ENCODE measurements at regions of chr1 and their contacts with region 1.

Region 1: GRCh38 chr1:225603538-225604354 is 49.2 kb downstream of the ENAH start:
- DNase-seq: no peak
- ATAC-seq: peak; percentile 78 to 90
- H3K4me3 ChIP-seq: peak overlapping the region; percentile 1 to 34 (median 14)
- H3K27ac ChIP-seq: peak overlapping the region; percentile 74 to 79 (median 77)
- H3K4me1 ChIP-seq: peaks cover 47 to 53% of the 10 kb centered on the region in 2 donors
- H3K27me3 ChIP-seq: no peaks in the 10 kb centered on the region
- CTCF ChIP-seq: no peak
- POLR2A ChIP-seq: no peak

Region 2: GRCh38 chr1:225700164-225700740 is 96.5 kb after region 1 on chr1:
- in situ Hi-C with region 1: no loop called
- intact Hi-C with region 1: loop called (anchors 2 kb)
- DNase-seq: peak; percentile 58 to 60
- ATAC-seq: peak; percentile 89 to 90
- H3K4me3 ChIP-seq: peak overlapping the region; percentile 41 to 57 (median 50)
- H3K27ac ChIP-seq: peak overlapping the region; percentile 85 to 93 (median 87)
- H3K4me1 ChIP-seq: peaks cover 13 to 27% of the 10 kb centered on the region in 2 donors
- H3K27me3 ChIP-seq: no peaks in the 10 kb centered on the region
- CTCF ChIP-seq: no peak
- POLR2A ChIP-seq: no peak

Measured in gastrocnemius medialis (tissue), 4 donors.